Ovary (tissue), 10 donors: ENCODE measurements at regions of chr18 and their contacts with region 1.

Region 1: GRCh38 chr18:77101410-77102258 is 30.9 kb downstream of the MBP start:
- DNase-seq: peak; percentile 80 to 88 (median 81)
- H3K4me3 ChIP-seq: no peak overlapping the region
- H3K27ac ChIP-seq: peak overlapping the region; percentile 82 to 84
- H3K4me1 ChIP-seq: peaks cover 31% of the 10 kb centered on the region
- H3K27me3 ChIP-seq: no peaks in the 10 kb centered on the region
- CTCF ChIP-seq: no peak
- EP300 ChIP-seq: no peak
- POLR2A ChIP-seq: no peak

Region 2: DNA sequence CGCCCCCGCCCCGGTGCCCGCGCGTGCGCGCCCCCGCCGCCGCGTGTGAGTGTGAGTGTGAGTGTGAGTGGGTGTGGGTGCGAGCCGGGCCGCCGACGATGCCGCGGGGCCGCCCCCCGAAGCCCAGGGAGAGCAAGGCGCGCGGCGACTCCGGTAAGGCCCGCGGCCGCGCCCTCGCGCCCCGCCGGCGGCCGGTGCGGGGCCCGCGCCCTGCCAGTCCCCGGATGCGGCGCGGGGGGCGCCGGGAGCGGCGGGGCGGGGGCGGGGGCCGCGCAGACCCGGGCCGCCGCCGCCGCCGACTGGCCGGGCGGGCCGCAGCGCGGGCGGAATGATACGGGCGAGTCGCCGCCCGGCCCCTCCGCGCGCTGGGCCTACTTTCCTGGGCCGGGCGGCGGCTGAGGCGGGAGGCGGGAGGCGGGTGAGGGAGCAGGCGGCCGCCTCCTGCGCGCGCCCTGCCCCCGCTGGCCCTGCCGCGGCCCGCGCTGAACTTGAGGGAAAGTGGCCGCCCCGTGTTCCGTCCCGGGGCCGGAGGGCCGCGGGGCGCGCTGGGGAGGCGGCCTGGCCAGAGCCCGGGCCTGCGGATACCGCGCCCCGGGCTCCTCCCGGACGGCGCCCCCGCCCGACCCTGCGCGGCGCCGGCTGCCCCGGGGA is 279.0 kb before region 1 on chr18 and contains the start of gene ZNF236:
- intact Hi-C with region 1: loop called in 1 of 4 experiments (anchors 10 kb)
- DNase-seq: peak; percentile 75 to 87 (median 81)
- H3K4me3 ChIP-seq: peak within 1 kb of the TSS; percentile 92
- H3K27ac ChIP-seq: peak within 1 kb of the TSS; percentile 94 to 97
- H3K4me1 ChIP-seq: peaks cover 16% of the 10 kb centered on the region
- H3K27me3 ChIP-seq: no peaks in the 10 kb centered on the region
- CTCF ChIP-seq: no peak
- EP300 ChIP-seq: no peak
- POLR2A ChIP-seq: peak; percentile 79
- total RNA-seq, gene ZNF236: 15.4 to 30.3 (median 24.4) TPM

Region 3: GRCh38 chr18:77013811-77014521 is 87.7 kb before region 1 on chr18:
- intact Hi-C with region 1: loop called in 1 of 4 experiments (anchors 10 kb)
- DNase-seq: peak in 2 of 5 donors; percentile 36 to 44
- H3K4me3 ChIP-seq: no peak overlapping the region
- H3K27ac ChIP-seq: peak overlapping the region; percentile 47 to 74
- H3K4me1 ChIP-seq: peaks cover 12% of the 10 kb centered on the region
- H3K27me3 ChIP-seq: no peaks in the 10 kb centered on the region
- CTCF ChIP-seq: no peak
- EP300 ChIP-seq: no peak
- POLR2A ChIP-seq: no peak